Ascending aorta (tissue), 2 donors: ENCODE measurements at regions of chr2 and their contacts with region 1.

Region 1: DNA sequence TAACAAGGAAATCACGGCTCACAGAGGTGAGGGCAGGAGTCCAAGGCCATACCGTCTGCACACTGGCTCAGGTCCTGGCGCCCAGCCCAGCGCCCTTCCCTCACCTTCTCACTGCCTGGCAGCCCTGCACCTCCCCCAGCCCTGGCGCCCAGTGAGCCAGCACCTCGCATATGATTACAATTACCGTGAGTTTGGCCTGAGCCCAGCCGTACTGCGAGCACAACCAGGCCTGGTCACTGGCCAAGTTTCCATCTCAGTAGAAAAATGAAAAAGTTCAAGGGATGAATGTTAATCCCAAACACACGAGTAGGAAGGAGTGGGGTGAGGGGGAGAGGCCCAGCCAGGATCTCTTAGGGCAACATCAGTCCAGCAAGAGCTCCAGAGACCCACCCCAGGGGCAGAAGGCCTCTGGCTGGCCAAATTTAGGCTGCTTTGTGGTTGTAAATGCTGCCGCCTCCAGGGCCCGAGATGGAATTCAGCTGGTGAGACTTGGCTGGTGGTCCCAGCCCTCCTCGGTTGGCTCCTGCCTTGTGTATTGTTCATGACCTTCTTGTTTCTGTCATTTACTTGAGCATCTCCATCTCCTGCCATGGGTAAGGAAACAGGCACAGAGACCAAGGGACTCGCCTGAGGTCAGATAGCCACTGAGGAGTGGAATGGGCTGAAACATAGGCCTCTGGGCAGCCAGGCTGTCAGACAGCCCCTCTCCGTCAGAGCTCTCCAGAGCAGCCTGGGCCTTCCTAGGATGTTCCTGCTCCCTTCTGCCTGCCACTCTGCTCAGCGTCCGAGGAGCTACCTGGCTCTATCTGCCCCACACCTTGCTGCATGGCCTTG is 68.2 kb downstream of the MCFD2 start:
- DNase-seq: peak; percentile 86 to 95
- H3K4me3 ChIP-seq: peak overlapping the region in 1 of 2 donors; percentile 5
- H3K27ac ChIP-seq: peak overlapping the region; percentile 89
- H3K4me1 ChIP-seq: peaks cover 46 to 56% of the 10 kb centered on the region in 2 donors
- H3K27me3 ChIP-seq: no peaks in the 10 kb centered on the region
- CTCF ChIP-seq: no peak

Region 2: DNA sequence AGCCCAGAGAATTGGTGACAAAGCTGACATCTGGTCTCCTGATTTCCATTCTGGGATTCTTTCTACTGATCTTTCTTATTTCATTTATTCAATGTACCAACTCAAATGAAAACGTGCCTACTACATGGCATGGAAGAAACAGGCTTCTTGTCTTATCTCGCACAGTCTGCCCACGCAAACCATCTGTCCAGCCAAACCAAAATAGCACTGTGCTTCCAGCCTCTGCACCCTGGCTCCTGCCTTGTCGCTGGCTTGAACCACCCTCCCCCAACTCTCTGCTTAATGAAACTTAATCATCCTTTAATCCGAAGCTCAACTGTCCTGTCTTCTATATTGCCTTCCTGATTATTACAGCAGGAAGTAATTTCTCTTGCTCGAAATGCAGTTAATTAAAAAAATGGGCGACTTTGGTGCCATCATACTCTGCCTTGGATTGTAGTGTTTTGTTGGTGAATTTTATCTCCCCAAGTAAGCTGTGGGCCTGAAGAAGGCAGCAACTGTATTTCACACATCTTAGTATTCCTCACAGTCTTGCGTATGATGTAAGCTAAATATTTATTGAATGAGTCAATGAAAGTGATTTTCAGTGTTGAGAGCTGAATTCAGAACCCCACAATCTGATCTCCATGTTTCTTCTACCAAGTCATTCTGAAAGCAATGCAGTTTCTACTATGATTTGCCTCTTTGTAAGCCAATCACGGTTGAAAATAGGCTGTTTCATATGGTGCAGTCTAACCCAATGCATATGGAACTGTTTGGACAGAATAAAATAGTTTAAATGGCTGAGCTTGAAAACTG is 177.3 kb before region 1 on chr2:
- intact Hi-C with region 1: no loop called
- DNase-seq: no peak
- H3K4me3 ChIP-seq: no peak overlapping the region
- H3K27ac ChIP-seq: no peak overlapping the region
- H3K4me1 ChIP-seq: peaks cover 0 to 5% of the 10 kb centered on the region in 2 donors
- H3K27me3 ChIP-seq: no peaks in the 10 kb centered on the region
- CTCF ChIP-seq: no peak

Region 3: DNA sequence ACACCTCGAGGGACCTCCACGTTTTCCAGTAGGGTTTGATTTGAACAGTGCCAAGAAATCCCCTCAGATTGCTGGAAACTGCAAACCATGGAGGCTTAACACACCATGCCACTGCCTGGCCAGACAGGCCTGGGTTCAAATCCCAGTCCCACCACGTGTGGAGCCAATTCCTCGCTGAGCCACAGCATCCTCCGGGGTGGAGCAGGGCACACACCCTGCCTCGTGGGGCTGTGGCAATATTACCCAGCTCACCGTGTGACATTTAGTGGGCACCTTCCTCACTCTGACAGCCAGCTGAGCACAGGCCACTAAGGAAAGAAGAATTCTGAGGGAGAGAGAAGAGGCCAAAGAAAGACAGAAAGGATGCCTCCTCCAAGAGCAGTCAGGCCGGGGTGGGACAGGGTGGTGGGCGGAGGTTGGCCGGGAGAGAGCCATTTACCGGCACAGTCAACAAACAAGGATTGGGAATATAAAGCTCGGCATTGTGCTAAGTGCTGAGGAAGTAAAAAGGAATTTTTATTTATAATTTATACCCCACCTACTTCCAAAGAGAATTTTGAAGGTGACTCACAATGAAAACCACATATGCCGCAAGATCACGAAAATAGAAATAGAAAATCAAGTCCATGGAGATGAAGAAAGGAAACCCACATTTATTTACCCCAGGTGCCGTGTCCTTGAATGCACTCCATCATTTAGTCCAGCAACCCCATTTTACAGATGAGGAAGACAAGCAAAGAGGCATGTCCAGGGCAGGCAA is 43.4 kb before region 1 on chr2:
- intact Hi-C with region 1: loop called (anchors 2 kb)
- DNase-seq: no peak
- H3K4me3 ChIP-seq: no peak overlapping the region
- H3K27ac ChIP-seq: peak overlapping the region; percentile 8 to 69
- H3K4me1 ChIP-seq: peaks cover 0 to 7% of the 10 kb centered on the region in 2 donors
- H3K27me3 ChIP-seq: no peaks in the 10 kb centered on the region
- CTCF ChIP-seq: no peak

Region 4: DNA sequence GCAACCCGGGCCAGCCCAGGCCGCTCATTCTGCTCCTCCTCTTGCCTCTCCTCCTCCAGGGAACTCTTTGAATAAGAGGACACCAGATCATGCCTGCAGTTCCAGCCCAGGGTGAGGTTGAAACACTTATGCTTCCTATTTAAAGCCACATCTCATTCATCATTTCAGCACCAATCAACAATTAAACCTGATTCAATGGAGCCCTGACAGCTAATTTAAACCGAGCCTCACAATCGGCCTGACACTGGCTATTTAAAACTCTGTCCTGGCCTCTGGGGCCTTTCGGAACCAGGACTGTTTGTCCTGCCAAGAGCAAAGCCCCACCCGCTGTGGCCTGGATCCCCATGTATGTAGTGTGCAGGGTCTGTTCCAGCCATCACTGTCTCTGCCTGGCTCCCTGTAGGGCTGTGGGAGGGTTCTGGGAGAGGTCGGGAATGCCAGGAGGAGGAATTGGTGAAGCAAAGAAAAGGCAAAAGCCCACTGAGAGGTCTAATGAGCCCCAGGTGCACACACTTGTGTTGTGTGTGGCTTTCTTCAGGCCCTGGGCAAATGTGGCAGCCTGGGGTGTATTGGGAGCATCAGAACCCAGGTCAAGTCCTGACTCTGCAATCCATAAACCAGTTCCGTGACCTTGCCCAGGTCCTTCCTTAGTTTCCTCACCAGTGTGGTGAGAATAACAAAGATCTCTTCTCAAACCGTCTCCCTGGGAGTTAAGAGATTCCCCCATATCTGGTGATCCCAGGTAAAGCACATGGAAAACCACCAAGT is 29.1 kb before region 1 on chr2:
- intact Hi-C with region 1: loop called (anchors 2 kb)
- DNase-seq: peak; percentile 75 to 90
- H3K4me3 ChIP-seq: no peak overlapping the region
- H3K27ac ChIP-seq: peak overlapping the region; percentile 68 to 78
- H3K4me1 ChIP-seq: peaks cover 26 to 42% of the 10 kb centered on the region in 2 donors
- H3K27me3 ChIP-seq: no peaks in the 10 kb centered on the region
- CTCF ChIP-seq: no peak

Region 5: GRCh38 chr2:46876741-46877384 is 29.4 kb after region 1 on chr2:
- intact Hi-C with region 1: loop called (anchors 2 kb)
- DNase-seq: no peak
- H3K4me3 ChIP-seq: no peak overlapping the region
- H3K27ac ChIP-seq: no peak overlapping the region
- H3K4me1 ChIP-seq: peaks cover 0 to 10% of the 10 kb centered on the region in 2 donors
- H3K27me3 ChIP-seq: no peaks in the 10 kb centered on the region
- CTCF ChIP-seq: peak; percentile 47 to 67 (median 66)